Right cardiac atrium (tissue), 5 donors: ENCODE measurements at regions of chr11 and their contacts with region 1.

Region 1: GRCh38 chr11:22539821-22540256 is 85.8 kb downstream of the FANCF start:
- DNase-seq: no peak
- ATAC-seq: peak in 1 of 2 donors; percentile 39
- H3K4me3 ChIP-seq: no peak overlapping the region
- H3K27ac ChIP-seq: no peak overlapping the region
- H3K4me1 ChIP-seq: no peaks in the 10 kb centered on the region
- H3K27me3 ChIP-seq: no peaks in the 10 kb centered on the region

Region 2: GRCh38 chr11:22331771-22332170 is 208.1 kb before region 1 on chr11:
- intact Hi-C with region 1: loop called in 1 of 4 experiments (anchors 5 kb)
- DNase-seq: no peak
- ATAC-seq: no peak
- H3K4me3 ChIP-seq: no peak overlapping the region
- H3K27ac ChIP-seq: no peak overlapping the region
- H3K4me1 ChIP-seq: no peaks in the 10 kb centered on the region
- H3K27me3 ChIP-seq: no peaks in the 10 kb centered on the region

Region 3: DNA sequence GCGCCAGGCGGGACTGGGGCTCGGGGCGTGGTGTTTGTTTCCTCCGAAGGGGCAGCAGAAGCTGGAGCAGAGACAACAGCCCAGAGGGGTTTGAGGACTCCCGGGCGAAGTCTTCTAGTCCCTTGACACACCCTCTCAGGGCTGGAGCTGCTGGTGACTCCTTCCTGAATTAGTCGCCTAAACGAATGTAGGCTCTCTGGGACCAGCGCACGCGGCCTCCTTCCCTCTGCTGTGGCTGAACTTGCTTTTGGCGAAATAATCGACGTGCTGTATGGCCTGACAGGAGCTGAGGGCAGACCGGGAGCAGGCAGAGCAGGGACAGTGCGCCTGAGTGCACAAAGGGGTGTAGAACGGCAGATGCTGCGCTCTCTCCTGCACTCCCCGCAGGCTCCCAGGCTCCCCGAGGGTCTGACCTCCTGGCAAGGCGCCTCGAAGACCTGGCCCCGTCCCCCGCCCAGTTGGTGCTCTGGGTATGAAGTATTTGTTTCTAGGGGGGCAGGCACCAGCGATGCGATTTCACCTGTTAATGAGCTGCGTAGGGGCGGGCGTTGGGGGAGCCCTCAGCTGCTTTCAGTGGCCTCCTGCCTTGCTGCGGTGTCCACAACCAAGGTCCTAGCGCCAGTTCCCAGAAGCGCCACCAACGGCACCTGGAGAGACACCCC is 196.3 kb before region 1 on chr11:
- intact Hi-C with region 1: loop called in 1 of 4 experiments (anchors 10 kb)
- DNase-seq: peak in 2 of 3 donors; percentile 29 to 37
- ATAC-seq: no peak
- H3K4me3 ChIP-seq: no peak overlapping the region
- H3K27ac ChIP-seq: no peak overlapping the region
- H3K4me1 ChIP-seq: no peaks in the 10 kb centered on the region
- H3K27me3 ChIP-seq: peaks cover 2% of the 10 kb centered on the region

Region 4: GRCh38 chr11:22416462-22416861 is 123.4 kb before region 1 on chr11:
- intact Hi-C with region 1: no loop called
- DNase-seq: no peak
- ATAC-seq: no peak
- H3K4me3 ChIP-seq: no peak overlapping the region
- H3K27ac ChIP-seq: no peak overlapping the region
- H3K4me1 ChIP-seq: no peaks in the 10 kb centered on the region
- H3K27me3 ChIP-seq: no peaks in the 10 kb centered on the region